Activated CD4-positive, alpha-beta memory T cell treated with anti-CD3 and anti-CD28 coated beads for 36 hours (primary cell): ENCODE measurements at regions of chr5 and their contacts with region 1.

Region 1: GRCh38 chr5:52948418-52949076 is 40.6 kb upstream of the ITGA2 start:
- DNase-seq: peak; percentile 74
- H3K4me3 Mint-ChIP-seq: no peak overlapping the region
- H3K27ac Mint-ChIP-seq: no peak overlapping the region
- H3K4me1 Mint-ChIP-seq: peaks cover 9% of the 10 kb centered on the region
- H3K27me3 Mint-ChIP-seq: no peaks in the 10 kb centered on the region

Region 2: GRCh38 chr5:52800394-52801081 is 148.0 kb before region 1 on chr5:
- CTCF ChIA-PET with region 1: no interaction called
- POLR2A ChIA-PET with region 1: no interaction called
- intact Hi-C with region 1: no loop called
- DNase-seq: peak; percentile 79
- H3K4me3 Mint-ChIP-seq: peak overlapping the region; percentile 88
- H3K27ac Mint-ChIP-seq: peak overlapping the region; percentile 96
- H3K4me1 Mint-ChIP-seq: peaks cover 53% of the 10 kb centered on the region
- H3K27me3 Mint-ChIP-seq: no peaks in the 10 kb centered on the region

Region 3: GRCh38 chr5:52938226-52938625 is 10.3 kb before region 1 on chr5:
- CTCF ChIA-PET with region 1: interaction called, 26 read pairs
- POLR2A ChIA-PET with region 1: no interaction called
- intact Hi-C with region 1: no loop called
- DNase-seq: no peak
- H3K4me3 Mint-ChIP-seq: no peak overlapping the region
- H3K27ac Mint-ChIP-seq: no peak overlapping the region
- H3K4me1 Mint-ChIP-seq: no peaks in the 10 kb centered on the region
- H3K27me3 Mint-ChIP-seq: no peaks in the 10 kb centered on the region

Region 4: GRCh38 chr5:53035868-53036381 is 87.4 kb after region 1 on chr5:
- CTCF ChIA-PET with region 1: interaction called, 34 read pairs
- POLR2A ChIA-PET with region 1: no interaction called
- intact Hi-C with region 1: loop called (anchors 2 kb)
- DNase-seq: no peak
- H3K4me3 Mint-ChIP-seq: no peak overlapping the region
- H3K27ac Mint-ChIP-seq: no peak overlapping the region
- H3K4me1 Mint-ChIP-seq: peaks cover 38% of the 10 kb centered on the region
- H3K27me3 Mint-ChIP-seq: peaks cover 5% of the 10 kb centered on the region

Region 5: DNA sequence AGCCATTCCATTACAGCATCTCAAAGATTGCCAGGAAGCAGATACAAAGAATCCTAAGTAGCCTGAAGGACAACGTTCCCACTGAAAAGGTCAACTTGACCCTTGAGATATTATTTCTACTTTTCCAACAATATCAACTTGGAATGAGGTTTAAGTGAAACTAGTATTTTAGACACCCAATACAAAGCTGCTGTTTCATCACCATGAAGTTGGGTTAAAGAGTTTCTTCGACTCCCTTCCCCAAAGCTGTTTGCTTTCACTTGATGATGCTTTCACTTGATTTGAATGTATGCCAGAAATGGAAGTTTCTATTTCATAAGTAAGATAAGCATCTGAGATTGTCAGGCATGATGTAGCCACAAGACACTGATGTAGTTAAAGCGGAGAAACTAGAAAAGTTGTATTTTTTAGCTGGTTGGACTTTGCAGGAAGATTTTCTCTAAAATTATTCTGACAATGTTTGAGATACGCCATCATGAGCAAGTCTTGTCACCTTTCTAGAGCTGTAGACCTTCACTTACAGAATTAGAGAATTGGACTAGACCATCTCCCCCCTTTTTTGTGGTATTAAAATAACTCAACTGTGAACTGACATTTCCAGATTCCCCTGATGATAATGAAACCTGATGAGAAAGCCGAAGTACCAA is 140.9 kb after region 1 on chr5:
- CTCF ChIA-PET with region 1: interaction called, 194 read pairs
- POLR2A ChIA-PET with region 1: interaction called, 5 read pairs
- intact Hi-C with region 1: no loop called
- DNase-seq: no peak
- H3K4me3 Mint-ChIP-seq: peak overlapping the region; percentile 14
- H3K27ac Mint-ChIP-seq: peak overlapping the region; percentile 5
- H3K4me1 Mint-ChIP-seq: peaks cover 24% of the 10 kb centered on the region
- H3K27me3 Mint-ChIP-seq: no peaks in the 10 kb centered on the region

Region 6: DNA sequence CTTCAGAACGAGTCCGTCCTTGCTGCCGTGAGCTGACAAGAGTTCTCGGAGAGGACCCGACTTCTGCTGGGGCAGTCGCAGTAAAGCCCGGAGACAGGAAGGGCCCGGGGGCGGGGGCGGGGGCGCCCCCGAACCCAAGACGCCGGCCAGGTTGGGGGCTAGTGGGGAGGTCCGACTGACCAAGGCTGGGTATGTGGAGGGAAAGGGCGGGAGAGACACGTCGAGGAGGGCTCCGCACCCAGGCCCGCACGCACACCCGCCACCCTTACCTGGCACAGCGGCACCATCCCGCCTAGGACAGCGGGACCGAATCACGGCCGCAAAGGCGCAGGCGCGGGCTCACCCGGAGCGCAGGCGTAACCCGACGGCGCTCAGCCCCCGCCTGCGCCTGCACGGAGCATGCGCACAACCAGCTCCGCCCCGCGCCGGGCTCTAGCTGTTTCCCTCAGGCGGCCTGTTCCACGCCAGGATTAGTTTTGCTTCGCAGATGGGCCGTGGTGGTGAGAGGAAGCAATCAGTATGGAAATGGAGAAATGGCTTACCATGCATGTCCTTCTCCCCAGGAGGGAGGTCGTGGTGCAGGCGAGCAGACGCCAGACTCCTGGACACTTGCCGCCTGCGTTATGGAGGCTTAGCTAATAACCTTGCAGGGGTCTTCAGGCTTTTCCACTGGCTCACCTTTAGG is 161.0 kb after region 1 on chr5 and contains the start of gene MOCS2:
- CTCF ChIA-PET with region 1: interaction called, 17 read pairs
- POLR2A ChIA-PET with region 1: interaction called, 4 read pairs
- intact Hi-C with region 1: loop called (anchors 1 kb)
- DNase-seq: peak; percentile 93
- H3K4me3 Mint-ChIP-seq: peak within 1 kb of the TSS; percentile 94
- H3K27ac Mint-ChIP-seq: peak within 1 kb of the TSS; percentile 78
- H3K4me1 Mint-ChIP-seq: peaks cover 42% of the 10 kb centered on the region
- H3K27me3 Mint-ChIP-seq: no peaks in the 10 kb centered on the region
- total RNA-seq, gene MOCS2: 20.7 to 21.6 TPM

Region 7: DNA sequence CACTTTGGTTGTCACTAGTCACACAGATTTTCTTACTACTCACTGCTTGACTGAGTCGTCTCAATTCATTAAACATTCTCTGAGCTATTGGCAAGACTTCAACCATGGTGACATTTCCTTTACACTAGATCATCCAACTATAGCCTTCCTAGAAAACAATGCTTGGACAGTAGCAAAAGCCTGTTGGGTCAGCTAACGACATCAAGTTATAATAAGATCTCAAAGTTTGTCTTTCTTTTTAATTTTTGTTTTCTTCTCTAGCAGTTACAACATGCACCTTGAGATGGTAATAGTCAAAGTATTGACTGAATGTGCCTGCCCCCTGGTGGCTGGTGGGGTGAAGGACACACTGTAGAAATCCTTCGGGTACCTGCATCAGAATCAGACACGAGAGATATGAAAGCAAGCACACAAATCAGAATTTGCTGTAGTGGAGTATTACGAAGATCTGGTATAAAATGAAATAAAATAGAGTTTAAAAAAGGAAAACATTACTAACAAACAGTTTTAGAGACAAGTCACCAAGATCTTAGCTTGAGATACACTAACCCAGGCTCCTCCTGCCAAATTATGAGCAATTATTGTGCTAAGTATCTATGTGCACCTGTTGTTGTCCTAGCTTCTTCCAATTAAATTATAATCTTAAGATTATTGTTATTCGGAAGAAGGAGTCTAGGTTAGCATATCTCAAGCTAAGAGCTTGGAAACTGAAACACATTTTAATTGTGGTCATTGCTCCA is 1280.7 kb after region 1 on chr5:
- CTCF ChIA-PET with region 1: interaction called, 11 read pairs
- POLR2A ChIA-PET with region 1: no interaction called
- intact Hi-C with region 1: no loop called
- DNase-seq: peak; percentile 80
- H3K4me3 Mint-ChIP-seq: no peak overlapping the region
- H3K27ac Mint-ChIP-seq: no peak overlapping the region
- H3K4me1 Mint-ChIP-seq: peaks cover 2% of the 10 kb centered on the region
- H3K27me3 Mint-ChIP-seq: no peaks in the 10 kb centered on the region